Calu3 (cell line): ENCODE measurements at regions of chr5 and their contacts with region 1.

Region 1: GRCh38 chr5:27845248-27845647 is 806.9 kb upstream of the CDH9 start:
- DNase-seq: no peak
- H3K4me3 Mint-ChIP-seq: no peak overlapping the region
- H3K27ac Mint-ChIP-seq: no peak overlapping the region
- H3K4me1 Mint-ChIP-seq: no peaks in the 10 kb centered on the region
- H3K27me3 Mint-ChIP-seq: no peaks in the 10 kb centered on the region
- CTCF ChIP-seq: no peak

Region 2: GRCh38 chr5:27598576-27598975 is 246.7 kb before region 1 on chr5:
- CTCF ChIA-PET with region 1: no interaction called
- intact Hi-C with region 1: no loop called
- DNase-seq: no peak
- H3K4me3 Mint-ChIP-seq: no peak overlapping the region
- H3K27ac Mint-ChIP-seq: no peak overlapping the region
- H3K4me1 Mint-ChIP-seq: no peaks in the 10 kb centered on the region
- H3K27me3 Mint-ChIP-seq: no peaks in the 10 kb centered on the region
- CTCF ChIP-seq: no peak

Region 3: DNA sequence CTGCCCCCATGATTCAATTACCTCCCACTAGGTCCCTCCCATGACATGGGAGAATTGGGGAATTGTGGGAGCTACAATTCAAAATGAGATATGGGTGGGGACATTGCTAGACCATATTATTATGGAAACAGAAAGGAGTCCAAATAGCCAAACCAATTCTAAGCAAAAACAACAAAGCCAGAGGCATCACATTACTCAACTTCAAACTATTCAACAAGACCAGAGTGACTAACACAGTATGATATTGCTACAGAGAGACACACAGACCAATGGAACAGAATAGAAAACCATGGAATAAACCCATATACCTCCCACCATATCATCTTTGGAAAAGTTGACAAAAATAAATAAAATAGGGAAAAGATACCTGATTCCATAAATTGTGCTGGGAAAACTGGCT is 96.4 kb before region 1 on chr5:
- CTCF ChIA-PET with region 1: no interaction called
- intact Hi-C with region 1: no loop called
- DNase-seq: no peak
- H3K4me3 Mint-ChIP-seq: no peak overlapping the region
- H3K27ac Mint-ChIP-seq: no peak overlapping the region
- H3K4me1 Mint-ChIP-seq: no peaks in the 10 kb centered on the region
- H3K27me3 Mint-ChIP-seq: no peaks in the 10 kb centered on the region
- CTCF ChIP-seq: no peak

Region 4: GRCh38 chr5:27928060-27928459 is 82.8 kb after region 1 on chr5:
- CTCF ChIA-PET with region 1: no interaction called
- intact Hi-C with region 1: no loop called
- DNase-seq: no peak
- H3K4me3 Mint-ChIP-seq: no peak overlapping the region
- H3K27ac Mint-ChIP-seq: no peak overlapping the region
- H3K4me1 Mint-ChIP-seq: no peaks in the 10 kb centered on the region
- H3K27me3 Mint-ChIP-seq: no peaks in the 10 kb centered on the region
- CTCF ChIP-seq: no peak

Region 5: DNA sequence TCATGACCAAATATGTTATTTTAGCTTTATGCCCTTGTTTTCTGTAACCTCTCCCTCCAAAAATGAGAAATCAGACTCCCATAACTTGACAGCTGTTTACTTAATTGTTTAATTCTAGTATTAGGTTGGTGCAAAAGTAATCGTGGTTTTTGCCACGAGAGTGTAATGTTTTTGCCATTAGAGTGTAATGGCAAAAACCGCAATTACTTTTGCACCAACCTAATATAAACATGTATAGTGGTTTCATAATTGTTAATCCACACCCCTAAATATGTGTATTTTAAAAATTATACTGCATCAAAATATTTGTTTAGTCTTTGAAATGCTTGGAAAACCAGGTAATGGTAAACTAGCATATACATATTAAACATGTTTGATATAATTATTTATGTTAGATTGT is 140.8 kb after region 1 on chr5:
- CTCF ChIA-PET with region 1: no interaction called
- intact Hi-C with region 1: no loop called
- DNase-seq: no peak
- H3K4me3 Mint-ChIP-seq: no peak overlapping the region
- H3K27ac Mint-ChIP-seq: no peak overlapping the region
- H3K4me1 Mint-ChIP-seq: no peaks in the 10 kb centered on the region
- H3K27me3 Mint-ChIP-seq: no peaks in the 10 kb centered on the region
- CTCF ChIP-seq: no peak

Region 6: DNA sequence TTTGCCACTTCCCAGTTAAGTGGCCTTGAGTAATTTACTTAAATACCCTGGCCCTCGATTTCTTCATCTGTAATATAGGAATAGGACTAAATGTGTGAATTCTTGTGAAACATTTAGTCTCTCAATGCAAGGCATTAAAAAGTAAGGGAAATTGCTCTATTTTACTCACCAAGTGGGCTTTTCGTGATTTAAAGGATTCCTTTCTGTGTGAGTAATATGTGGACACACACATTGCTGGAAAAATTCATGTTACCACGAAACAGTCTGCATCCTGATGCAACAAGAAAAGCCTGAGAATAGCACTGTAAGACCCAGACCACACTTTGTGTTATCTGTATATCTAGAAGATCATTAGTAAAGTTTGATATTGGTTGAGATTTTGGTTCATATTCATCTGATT is 436.1 kb after region 1 on chr5:
- CTCF ChIA-PET with region 1: interaction called, 10 read pairs
- intact Hi-C with region 1: no loop called
- DNase-seq: no peak
- H3K4me3 Mint-ChIP-seq: no peak overlapping the region
- H3K27ac Mint-ChIP-seq: no peak overlapping the region
- H3K4me1 Mint-ChIP-seq: no peaks in the 10 kb centered on the region
- H3K27me3 Mint-ChIP-seq: no peaks in the 10 kb centered on the region
- CTCF ChIP-seq: no peak